Heart left ventricle (tissue), 16 donors: ENCODE measurements at regions of chrX and their contacts with region 1.

Region 1: GRCh38 chrX:25004485-25005032 is 11.2 kb downstream of the ARX start:
- DNase-seq: no peak
- ATAC-seq: peak in 1 of 4 donors; percentile 34
- H3K4me3 ChIP-seq: peak overlapping the region in 7 of 12 donors; percentile 9 to 34 (median 17)
- H3K27ac ChIP-seq: no peak overlapping the region
- H3K4me1 ChIP-seq: peaks cover 0 to 25% (median 3%) of the 10 kb centered on the region in 12 donors
- H3K27me3 ChIP-seq: peaks cover 0 to 96% (median 62%) of the 10 kb centered on the region in 9 donors
- CTCF ChIP-seq: no peak
- POLR2A ChIP-seq: no peak

Region 2: GRCh38 chrX:24693453-24694202 is 310.9 kb before region 1 on chrX and contains the start of gene POLA1:
- intact Hi-C with region 1: loop called in 1 of 10 experiments (anchors 5 kb)
- DNase-seq: peak; percentile 92 to 95 (median 94)
- ATAC-seq: peak; percentile 98 to 99 (median 99)
- H3K4me3 ChIP-seq: peak within 1 kb of the TSS; percentile 0 to 92 (median 71)
- H3K27ac ChIP-seq: peak within 1 kb of the TSS in 11 of 12 donors; percentile 56 to 89 (median 82)
- H3K4me1 ChIP-seq: peaks cover 0 to 12% (median 0%) of the 10 kb centered on the region in 12 donors
- H3K27me3 ChIP-seq: no peaks in the 10 kb centered on the region
- CTCF ChIP-seq: peak in 6 of 12 donors; percentile 10 to 47 (median 28)
- POLR2A ChIP-seq: peak in 1 of 2 donors; percentile 23
- total RNA-seq, gene POLA1: 4.1 to 8.1 (median 6.6) TPM